Left ventricle myocardium inferior (tissue), 1 donor: ENCODE measurements at regions of chr19 and their contacts with region 1.

Region 1: DNA sequence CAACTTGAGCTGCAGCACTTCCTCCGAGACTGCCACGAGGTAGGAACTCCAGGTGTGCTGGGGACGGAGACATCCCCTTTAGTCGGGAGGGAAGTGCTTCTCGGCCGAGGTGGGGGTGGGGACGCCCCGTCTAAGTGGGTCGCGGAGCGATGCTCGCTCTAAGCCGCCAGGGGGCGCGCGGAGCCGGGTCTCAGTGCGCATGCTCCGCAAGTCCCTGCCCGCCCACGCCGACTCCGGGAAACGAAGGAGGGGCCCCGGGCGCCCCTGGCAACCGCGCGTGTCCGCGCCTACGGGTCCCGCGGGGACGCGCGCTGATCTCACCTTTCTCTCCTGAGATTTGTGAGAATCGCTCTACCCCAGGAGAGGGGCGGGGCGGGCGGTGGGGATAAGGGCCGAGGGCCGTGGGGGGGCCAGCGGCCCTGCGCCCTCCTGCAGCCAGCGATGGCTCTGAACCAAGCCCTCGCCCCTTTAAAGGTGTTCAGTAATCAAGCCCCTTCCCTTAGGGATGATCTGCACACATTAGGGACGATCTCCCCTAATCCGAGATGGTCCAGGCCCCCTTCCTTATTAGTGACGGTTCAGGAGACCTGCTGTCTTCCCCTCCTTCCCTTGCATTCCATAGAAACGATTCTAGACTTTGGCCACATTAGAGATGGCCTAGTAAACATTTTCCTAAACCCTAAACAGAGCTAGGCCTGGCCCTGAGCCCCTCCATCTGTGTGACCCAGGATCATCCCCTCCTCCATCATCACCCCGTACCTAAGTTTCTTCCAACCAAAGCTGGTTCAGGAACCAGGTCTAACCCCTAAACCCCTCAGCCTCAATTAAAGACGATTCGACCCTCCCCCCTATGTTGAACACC is 47.3 kb upstream of the SHKBP1 start:
- DNase-seq: peak; percentile 82
- H3K4me3 ChIP-seq: peak overlapping the region; percentile 67
- H3K27ac ChIP-seq: no peak overlapping the region
- H3K4me1 ChIP-seq: peaks cover 9% of the 10 kb centered on the region
- H3K27me3 ChIP-seq: no peaks in the 10 kb centered on the region
- CTCF ChIP-seq: peak; percentile 97

Region 2: GRCh38 chr19:40598121-40598917 is 69.0 kb after region 1 on chr19:
- intact Hi-C with region 1: loop called (anchors 5 kb)
- DNase-seq: peak; percentile 89
- H3K4me3 ChIP-seq: peak overlapping the region; percentile 58
- H3K27ac ChIP-seq: peak overlapping the region; percentile 93
- H3K4me1 ChIP-seq: peaks cover 63% of the 10 kb centered on the region
- H3K27me3 ChIP-seq: peaks cover 35% of the 10 kb centered on the region
- CTCF ChIP-seq: peak; percentile 97